Activated B cell treated with CpG ODN at 0.5 μM for 24 hours (primary cell): ENCODE measurements at regions of chr16 and their contacts with region 1.

Region 1: DNA sequence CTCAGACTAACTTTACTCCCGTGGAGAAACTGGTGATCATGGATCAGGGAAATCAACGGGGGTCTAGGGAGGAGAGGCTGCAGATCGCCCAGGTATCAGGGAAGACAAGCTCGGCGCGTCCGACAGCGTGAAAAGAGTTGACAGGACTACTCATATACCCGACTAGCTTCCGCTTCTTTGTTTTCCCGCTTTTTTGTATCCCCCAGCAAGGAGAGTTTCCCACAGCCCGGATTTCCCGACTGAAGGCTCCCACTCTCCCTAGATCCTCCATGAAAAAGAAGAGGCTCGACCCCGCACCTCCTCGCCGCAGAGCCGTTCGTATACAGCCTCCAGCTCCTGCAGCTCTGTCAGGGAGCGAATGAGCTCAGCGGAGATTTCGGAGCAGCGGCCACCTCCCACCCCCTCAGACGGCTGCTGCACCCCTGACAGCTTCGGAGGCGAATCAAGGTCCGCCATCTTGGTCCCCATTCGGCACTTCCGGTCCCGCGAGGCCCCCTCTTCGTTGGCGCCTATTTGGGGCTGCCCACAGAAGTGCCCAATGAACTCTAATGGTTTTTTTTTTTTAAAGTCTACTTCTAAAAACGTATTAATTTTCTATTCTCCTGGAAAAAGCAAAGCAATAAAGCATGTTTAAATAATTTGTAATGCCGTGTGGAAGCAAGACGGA is at the start of gene COG4:
- DNase-seq: peak; percentile 80
- ATAC-seq: peak; percentile 85
- H3K4me3 Mint-ChIP-seq: peak within 1 kb of the TSS; percentile 99
- H3K27ac Mint-ChIP-seq: peak within 1 kb of the TSS; percentile 99
- H3K4me1 Mint-ChIP-seq: peaks cover 53% of the 10 kb centered on the region
- H3K27me3 Mint-ChIP-seq: no peaks in the 10 kb centered on the region
- CTCF ChIP-seq: no peak
- total RNA-seq, gene COG4: 39.8 and 42.5 TPM in 2 replicates

Region 2: DNA sequence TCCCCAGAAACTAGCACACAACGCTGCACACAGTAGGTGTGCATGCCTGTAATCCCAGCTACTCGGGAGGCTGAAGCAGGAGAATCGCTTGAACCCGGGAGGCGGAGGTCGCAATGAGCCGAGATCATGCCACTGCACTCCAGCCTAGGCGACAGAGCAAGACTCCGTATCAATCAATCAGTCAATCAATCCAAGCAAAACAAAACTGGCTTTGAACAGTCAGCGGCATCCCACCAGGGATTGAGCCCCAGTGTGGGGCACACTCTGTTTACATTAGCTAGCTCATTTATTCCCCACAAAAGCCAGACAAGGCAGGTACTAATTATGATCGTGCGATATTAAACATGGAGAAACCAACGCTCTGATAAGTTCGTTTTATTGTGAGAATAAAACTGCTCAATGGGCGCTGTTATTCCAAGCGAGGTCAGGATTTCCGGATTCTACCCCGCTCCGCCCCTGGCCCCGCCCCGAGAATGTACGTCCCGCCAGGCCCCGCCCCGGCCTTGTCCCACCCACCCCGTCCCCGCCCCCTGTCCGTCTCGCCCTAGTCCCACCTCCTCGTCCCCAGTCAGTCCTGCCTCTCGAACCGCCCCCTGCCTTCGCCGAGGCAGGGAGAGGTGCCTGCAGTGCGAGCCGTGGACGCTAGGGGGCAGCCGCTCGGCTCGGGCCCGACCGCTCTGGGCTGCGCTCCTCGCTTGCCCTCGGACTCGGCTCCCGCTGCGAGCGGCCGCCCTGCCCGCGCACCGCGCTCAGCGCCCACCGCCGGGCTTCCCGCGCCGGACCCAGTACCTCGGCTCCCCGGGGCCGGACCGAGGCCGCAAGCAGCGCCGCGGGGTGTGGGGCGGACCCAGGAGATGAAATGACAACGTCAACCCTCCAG is 1212.3 kb before region 1 on chr16 and contains the start of gene VPS4A:
- CTCF ChIA-PET with region 1: no interaction called
- POLR2A ChIA-PET with region 1: no interaction called
- intact Hi-C with region 1: loop called (anchors 10 kb)
- DNase-seq: peak; percentile 99
- ATAC-seq: peak; percentile 98
- H3K4me3 Mint-ChIP-seq: peak within 1 kb of the TSS; percentile 98
- H3K27ac Mint-ChIP-seq: peak within 1 kb of the TSS; percentile 91
- H3K4me1 Mint-ChIP-seq: peaks cover 27% of the 10 kb centered on the region
- H3K27me3 Mint-ChIP-seq: no peaks in the 10 kb centered on the region
- CTCF ChIP-seq: no peak
- total RNA-seq, gene VPS4A: 34.2 and 41.7 TPM in 2 replicates

Region 3: DNA sequence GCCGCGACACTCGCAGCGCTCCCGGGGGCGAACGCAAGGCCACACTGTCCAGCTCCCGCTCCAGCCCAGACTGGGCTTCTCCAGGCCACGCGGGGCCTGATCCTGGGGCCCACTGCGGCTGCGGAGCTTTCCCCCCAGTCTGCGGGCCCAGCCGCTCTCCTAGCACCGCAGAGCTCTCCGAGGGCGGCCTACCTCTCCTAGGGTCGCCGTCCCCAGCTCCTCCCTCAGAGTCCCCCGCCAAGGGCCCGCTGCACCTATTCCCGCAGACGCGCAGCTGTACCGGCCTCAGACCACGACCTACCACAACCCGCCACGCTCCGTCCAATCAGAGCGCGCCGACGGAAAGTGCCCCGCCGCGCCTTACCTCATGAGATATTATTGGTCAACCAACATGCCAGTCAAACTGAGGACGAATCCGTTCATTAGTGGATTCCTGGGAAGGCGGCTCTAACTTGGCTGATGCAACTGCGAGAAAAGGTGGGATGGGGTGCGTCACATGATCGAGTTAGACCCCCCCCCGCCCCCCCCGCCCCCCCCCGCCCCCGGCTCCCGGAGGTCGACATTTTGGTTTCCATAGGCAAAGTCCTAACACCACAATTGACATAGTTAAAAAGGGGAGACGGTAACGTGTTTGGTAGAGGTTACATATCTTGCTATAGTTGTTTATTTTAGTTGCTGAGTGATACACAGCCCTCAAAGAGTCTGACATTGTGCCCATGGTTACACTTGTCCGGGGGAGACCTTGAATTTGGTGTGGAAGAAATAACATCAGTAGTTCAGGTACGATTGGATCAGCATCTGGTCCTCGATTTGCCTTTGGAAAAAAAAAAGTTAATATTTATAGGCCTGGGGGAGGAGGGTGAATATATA is 233.7 kb before region 1 on chr16 and contains the start of gene AARS1:
- CTCF ChIA-PET with region 1: no interaction called
- POLR2A ChIA-PET with region 1: interaction called, 16 read pairs
- intact Hi-C with region 1: loop called (anchors 1 kb)
- DNase-seq: peak; percentile 84
- ATAC-seq: peak; percentile 96
- H3K4me3 Mint-ChIP-seq: peak within 1 kb of the TSS; percentile 98
- H3K27ac Mint-ChIP-seq: peak within 1 kb of the TSS; percentile 96
- H3K4me1 Mint-ChIP-seq: peaks cover 16% of the 10 kb centered on the region
- H3K27me3 Mint-ChIP-seq: no peaks in the 10 kb centered on the region
- CTCF ChIP-seq: no peak
- total RNA-seq, gene AARS1: 152 and 154 TPM in 2 replicates

Region 4: DNA sequence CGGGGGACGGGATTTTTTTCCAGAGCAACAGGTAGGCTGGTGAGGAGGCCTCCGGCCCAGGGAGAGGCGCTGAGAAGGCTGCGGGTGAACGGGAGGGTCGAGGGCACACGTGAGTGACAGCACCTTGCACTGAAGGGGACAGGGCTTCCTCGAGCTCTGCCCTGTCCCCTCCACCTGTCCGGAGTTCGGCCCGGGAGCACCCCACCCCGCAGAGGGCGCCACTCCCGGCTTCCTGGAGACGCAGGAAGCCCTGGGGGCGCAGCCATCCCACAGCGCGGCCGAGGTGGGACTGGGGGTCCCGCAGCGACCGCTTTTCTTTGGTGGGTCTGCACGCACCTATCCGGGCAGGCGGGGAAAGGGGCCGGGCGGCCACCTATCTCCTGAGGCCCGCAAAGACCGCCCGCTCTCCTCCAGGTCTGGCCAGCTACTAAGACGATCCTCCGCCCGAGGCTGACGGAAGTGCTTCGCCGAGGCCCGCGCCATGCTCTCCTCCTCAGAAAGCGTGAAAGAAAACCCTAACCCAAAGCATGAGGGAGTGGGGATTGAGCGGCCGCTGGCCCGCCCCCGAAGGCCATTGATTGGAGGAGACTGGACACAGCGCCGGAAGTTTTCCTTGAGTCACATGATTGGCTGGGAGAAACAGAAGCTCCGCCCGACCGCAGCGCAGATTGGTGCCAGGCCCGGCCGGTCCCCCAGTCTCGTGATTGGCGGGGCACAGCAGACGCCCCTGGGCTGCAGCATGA is 142.2 kb before region 1 on chr16:
- CTCF ChIA-PET with region 1: interaction called, 3 read pairs
- POLR2A ChIA-PET with region 1: interaction called, 28 read pairs
- intact Hi-C with region 1: loop called (anchors 1 kb)
- DNase-seq: peak; percentile 83
- ATAC-seq: peak; percentile 90
- H3K4me3 Mint-ChIP-seq: peak overlapping the region; percentile 96
- H3K27ac Mint-ChIP-seq: peak overlapping the region; percentile 96
- H3K4me1 Mint-ChIP-seq: peaks cover 19% of the 10 kb centered on the region
- H3K27me3 Mint-ChIP-seq: no peaks in the 10 kb centered on the region
- CTCF ChIP-seq: no peak

Region 5: DNA sequence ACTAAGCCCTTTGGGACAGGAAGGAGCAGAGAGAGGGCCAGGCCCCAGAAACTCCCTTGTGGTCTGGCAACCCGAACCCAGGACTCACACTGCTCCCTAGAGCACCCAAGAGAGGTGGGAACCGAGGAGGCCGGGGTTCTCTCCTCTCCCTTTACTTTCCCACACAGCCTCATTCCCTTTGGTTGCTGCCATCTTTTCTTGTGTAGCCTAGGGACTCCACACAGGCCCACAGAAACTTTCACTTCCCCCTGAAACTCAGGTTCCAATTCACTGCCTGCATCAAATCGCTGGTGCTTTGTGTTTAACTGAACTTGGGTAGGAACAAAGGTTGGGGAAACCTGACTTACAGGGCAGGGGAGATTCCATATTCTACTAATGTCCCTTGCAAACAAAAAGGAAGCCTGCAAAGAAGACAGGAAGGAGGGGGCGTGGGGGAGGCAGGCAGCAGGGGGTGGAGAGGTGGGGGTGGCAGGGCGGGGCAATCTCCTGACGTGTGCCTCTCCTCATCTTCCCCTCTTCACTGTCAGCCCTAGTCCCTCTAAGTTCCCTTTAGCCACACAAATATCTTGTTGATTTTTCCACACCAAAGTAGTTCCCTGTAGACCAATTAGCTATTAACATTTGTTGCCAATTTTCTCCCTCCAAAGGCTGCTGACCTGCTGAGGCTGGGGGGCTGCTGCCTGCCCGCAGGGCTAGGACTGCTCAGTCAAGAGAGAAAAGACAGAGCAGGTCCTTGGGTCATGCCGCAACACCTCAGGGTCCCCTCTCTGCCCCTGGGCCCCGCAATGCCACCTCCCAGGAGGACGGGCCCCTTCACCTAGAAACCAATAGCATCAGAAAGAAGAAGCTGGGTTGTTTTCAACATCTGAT is 92.3 kb before region 1 on chr16:
- CTCF ChIA-PET with region 1: interaction called, 4 read pairs
- POLR2A ChIA-PET with region 1: interaction called, 8 read pairs
- intact Hi-C with region 1: loop called (anchors 2 kb)
- DNase-seq: peak; percentile 57
- ATAC-seq: peak; percentile 69
- H3K4me3 Mint-ChIP-seq: peak overlapping the region; percentile 75
- H3K27ac Mint-ChIP-seq: peak overlapping the region; percentile 97
- H3K4me1 Mint-ChIP-seq: peaks cover 83% of the 10 kb centered on the region
- H3K27me3 Mint-ChIP-seq: no peaks in the 10 kb centered on the region
- CTCF ChIP-seq: no peak

Region 6: GRCh38 chr16:70454222-70455034 is 68.8 kb before region 1 on chr16 and contains the start of gene FCSK:
- CTCF ChIA-PET with region 1: no interaction called
- POLR2A ChIA-PET with region 1: interaction called, 4 read pairs
- intact Hi-C with region 1: loop called (anchors 1 kb)
- DNase-seq: peak; percentile 78
- ATAC-seq: peak; percentile 92
- H3K4me3 Mint-ChIP-seq: peak within 1 kb of the TSS; percentile 88
- H3K27ac Mint-ChIP-seq: peak within 1 kb of the TSS; percentile 89
- H3K4me1 Mint-ChIP-seq: peaks cover 16% of the 10 kb centered on the region
- H3K27me3 Mint-ChIP-seq: no peaks in the 10 kb centered on the region
- CTCF ChIP-seq: no peak
- total RNA-seq, gene FCSK: 20.1 and 21.4 TPM in 2 replicates

Region 7: DNA sequence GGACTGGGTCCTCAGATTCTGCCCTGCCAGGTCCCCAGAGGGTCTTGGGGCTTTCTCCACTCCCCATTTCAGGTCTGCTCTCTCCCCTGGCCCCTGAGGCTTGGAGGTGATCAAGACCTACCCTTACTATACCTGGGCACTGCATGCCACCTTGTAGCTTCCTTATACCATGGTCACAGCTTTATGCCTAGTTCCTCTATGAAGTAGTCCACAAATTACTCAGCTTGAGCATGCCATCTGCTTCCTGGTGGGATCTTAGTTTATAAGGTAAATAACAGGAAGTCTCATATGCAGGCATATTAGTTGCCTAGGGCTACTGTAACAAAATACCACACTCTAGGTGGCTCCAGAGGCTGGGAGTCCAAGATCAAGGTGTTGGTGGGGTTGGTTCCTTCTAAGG is 1659.8 kb after region 1 on chr16:
- CTCF ChIA-PET with region 1: no interaction called
- POLR2A ChIA-PET with region 1: no interaction called
- intact Hi-C with region 1: no loop called
- DNase-seq: no peak
- ATAC-seq: peak; percentile 18
- H3K4me3 Mint-ChIP-seq: no peak overlapping the region
- H3K27ac Mint-ChIP-seq: no peak overlapping the region
- H3K4me1 Mint-ChIP-seq: no peaks in the 10 kb centered on the region
- H3K27me3 Mint-ChIP-seq: no peaks in the 10 kb centered on the region
- CTCF ChIP-seq: no peak